ENCODE measurements at regions of chr22 and their contacts with region 1.

Region 1: DNA sequence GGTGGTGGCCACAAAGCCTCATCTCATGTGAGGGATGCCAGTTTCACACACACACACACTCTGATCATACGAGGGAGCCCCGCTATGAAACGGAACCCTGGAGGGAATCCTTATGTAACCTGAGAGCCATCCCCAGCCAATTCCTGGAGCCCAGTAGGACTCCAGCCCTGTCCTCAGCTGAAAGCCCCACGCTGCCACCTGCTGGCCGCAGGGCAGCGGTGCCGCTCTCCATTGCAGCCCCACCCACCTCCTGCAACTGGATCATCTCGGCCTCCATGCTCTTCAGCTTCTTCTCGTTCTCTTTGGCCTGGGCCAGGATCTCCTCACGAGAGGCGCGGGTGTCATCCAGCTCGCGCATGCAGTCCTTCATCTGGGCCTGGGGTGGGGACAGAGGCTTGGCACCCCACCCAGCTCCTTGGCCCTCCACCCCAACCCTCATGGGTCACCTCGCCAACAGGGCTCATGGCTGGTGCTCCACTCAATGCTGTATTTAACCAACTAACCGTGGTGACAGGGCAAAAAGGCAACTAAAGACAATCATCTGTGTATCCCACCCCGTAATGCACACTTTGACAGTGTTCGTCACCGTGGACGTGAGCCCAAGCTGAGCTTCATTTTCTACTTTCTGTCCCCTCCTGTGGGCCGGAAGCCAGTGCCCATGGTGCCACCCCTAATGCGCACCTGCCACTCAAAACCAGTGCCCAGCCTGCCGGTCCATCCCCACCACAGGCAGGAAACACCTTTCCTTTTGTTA is 33.7 kb downstream of the APOL1 start:
- DNase-seq: peak; percentile 78 to 90 (median 85)
- H3K4me3 ChIP-seq: no peak overlapping the region
- H3K27ac ChIP-seq: peak overlapping the region in 1 of 2 donors; percentile 49
- H3K4me1 ChIP-seq: no peaks in the 10 kb centered on the region
- H3K27me3 ChIP-seq: no peaks in the 10 kb centered on the region
- CTCF ChIP-seq: peak; percentile 85 to 95 (median 91)
- EP300 ChIP-seq: no peak
- POLR2A ChIP-seq: peak; percentile 6

Region 2: GRCh38 chr22:36136475-36136874 is 150.2 kb before region 1 on chr22:
- intact Hi-C with region 1: no loop called
- DNase-seq: no peak
- H3K4me3 ChIP-seq: no peak overlapping the region
- H3K27ac ChIP-seq: no peak overlapping the region
- H3K4me1 ChIP-seq: no peaks in the 10 kb centered on the region
- H3K27me3 ChIP-seq: no peaks in the 10 kb centered on the region
- CTCF ChIP-seq: no peak
- EP300 ChIP-seq: no peak
- POLR2A ChIP-seq: no peak

Region 3: DNA sequence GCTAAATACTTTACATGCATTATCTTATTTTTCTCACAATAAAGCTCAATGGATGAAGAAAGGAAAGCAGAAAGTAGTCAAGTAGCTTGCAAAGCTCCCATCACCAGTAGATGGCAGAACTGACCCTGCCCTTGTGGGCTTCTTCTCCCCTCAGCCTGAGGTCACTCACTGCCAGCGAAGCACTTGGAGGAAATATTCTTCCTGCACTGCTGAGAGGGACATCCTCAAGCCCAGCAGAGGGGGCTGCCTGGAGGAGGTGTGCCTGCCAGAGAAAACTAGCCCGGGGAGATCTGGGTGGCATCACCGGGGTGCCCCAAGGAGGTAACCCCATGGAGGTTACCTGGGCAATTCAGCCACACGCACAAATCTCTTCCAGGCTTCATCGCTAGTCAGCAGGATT is 91.7 kb before region 1 on chr22:
- intact Hi-C with region 1: loop called (anchors 5 to 10 kb)
- DNase-seq: peak; percentile 46 to 71 (median 57)
- H3K4me3 ChIP-seq: no peak overlapping the region
- H3K27ac ChIP-seq: no peak overlapping the region
- H3K4me1 ChIP-seq: peaks cover 17% of the 10 kb centered on the region
- H3K27me3 ChIP-seq: no peaks in the 10 kb centered on the region
- CTCF ChIP-seq: peak; percentile 25 to 61 (median 39)
- EP300 ChIP-seq: no peak
- POLR2A ChIP-seq: no peak

Region 4: GRCh38 chr22:36221799-36222751 is 64.6 kb before region 1 on chr22:
- intact Hi-C with region 1: loop called in 1 of 4 experiments (anchors 5 kb)
- DNase-seq: peak; percentile 50 to 68 (median 62)
- H3K4me3 ChIP-seq: no peak overlapping the region
- H3K27ac ChIP-seq: no peak overlapping the region
- H3K4me1 ChIP-seq: peaks cover 1% of the 10 kb centered on the region
- H3K27me3 ChIP-seq: no peaks in the 10 kb centered on the region
- CTCF ChIP-seq: peak; percentile 31 to 61 (median 34)
- EP300 ChIP-seq: no peak
- POLR2A ChIP-seq: no peak